GM18951 (cell line): ENCODE measurements at regions of chr1 and their contacts with region 1.

Region 1: GRCh38 chr1:5514519-5515183 is 477.6 kb downstream of the NPHP4 start:
- POLR2A ChIP-seq: no peak

Region 2: GRCh38 chr1:5740865-5741860 is 226.5 kb after region 1 on chr1:
- in situ Hi-C with region 1: no loop called
- POLR2A ChIP-seq: no peak

Region 3: DNA sequence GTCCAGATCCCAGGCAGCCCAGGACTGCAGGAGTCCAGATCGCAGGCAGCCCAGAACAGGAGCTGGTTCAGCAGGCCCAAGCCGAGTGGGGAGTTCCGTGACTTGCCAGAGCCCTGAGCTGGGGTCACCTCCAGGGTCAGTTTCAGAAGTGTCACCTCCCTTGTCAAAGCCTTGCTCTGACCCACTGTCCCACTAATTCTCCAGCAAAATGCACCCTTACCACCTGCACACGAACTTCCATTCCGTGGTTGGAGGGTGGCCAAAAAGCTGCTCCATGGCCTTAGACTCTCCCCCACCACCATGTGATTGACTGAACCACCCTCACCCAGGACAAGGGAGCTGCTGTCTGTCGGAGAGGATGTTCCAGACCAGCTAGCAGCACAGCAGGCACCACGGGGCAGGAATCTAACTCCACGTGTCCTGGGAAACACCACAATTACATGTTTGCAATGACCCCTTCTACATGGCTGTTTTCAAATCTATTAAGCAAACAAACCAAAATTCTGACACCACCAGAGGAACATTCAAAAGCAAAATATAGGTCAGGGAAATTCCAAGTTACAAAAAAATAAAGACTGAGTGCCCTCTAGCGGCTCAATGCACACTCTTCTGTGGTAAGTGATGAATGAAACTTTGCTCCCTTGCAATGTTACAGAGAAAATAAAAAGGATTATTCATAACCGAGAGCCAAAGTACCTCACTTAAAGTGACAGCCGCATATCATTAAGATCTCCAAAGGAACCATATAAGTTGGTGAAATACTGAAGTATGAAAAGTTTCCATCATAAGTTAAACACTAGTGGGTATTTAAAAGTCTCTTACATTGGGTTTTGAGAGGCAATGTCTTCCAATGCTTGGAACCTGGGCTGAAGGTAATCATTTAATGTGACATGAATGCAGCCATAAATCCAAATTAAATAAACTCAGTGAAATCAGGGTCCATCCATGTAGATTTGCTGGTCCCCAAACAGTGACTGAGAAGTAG is 401.2 kb after region 1 on chr1:
- in situ Hi-C with region 1: loop called (anchors 10 kb)
- POLR2A ChIP-seq: no peak